ENCODE measurements at regions of chr19 and their contacts with region 1.

Region 1: GRCh38 chr19:46728693-46729676 is 12.1 kb upstream of the PRKD2 start:
- DNase-seq: peak; percentile 82
- H3K4me3 Mint-ChIP-seq: no peak overlapping the region
- H3K27ac Mint-ChIP-seq: no peak overlapping the region
- H3K4me1 Mint-ChIP-seq: peaks cover 14% of the 10 kb centered on the region
- H3K27me3 Mint-ChIP-seq: no peaks in the 10 kb centered on the region

Region 2: GRCh38 chr19:46717034-46717723 is 11.8 kb before region 1 on chr19 and contains the start of gene PRKD2:
- CTCF ChIA-PET with region 1: interaction called, 30 read pairs
- intact Hi-C with region 1: no loop called
- DNase-seq: peak; percentile 93
- H3K4me3 Mint-ChIP-seq: peak within 1 kb of the TSS; percentile 96
- H3K27ac Mint-ChIP-seq: peak within 1 kb of the TSS; percentile 94
- H3K4me1 Mint-ChIP-seq: peaks cover 46% of the 10 kb centered on the region
- H3K27me3 Mint-ChIP-seq: no peaks in the 10 kb centered on the region
- total RNA-seq, gene PRKD2: 62.2 to 62.3 TPM

Region 3: GRCh38 chr19:46741447-46741846 is 12.5 kb after region 1 on chr19:
- CTCF ChIA-PET with region 1: interaction called, 21 read pairs
- intact Hi-C with region 1: no loop called
- DNase-seq: no peak
- H3K4me3 Mint-ChIP-seq: no peak overlapping the region
- H3K27ac Mint-ChIP-seq: no peak overlapping the region
- H3K4me1 Mint-ChIP-seq: peaks cover 45% of the 10 kb centered on the region
- H3K27me3 Mint-ChIP-seq: no peaks in the 10 kb centered on the region

Region 4: GRCh38 chr19:46813839-46814363 is 84.9 kb after region 1 on chr19:
- CTCF ChIA-PET with region 1: no interaction called
- intact Hi-C with region 1: no loop called
- DNase-seq: no peak
- H3K4me3 Mint-ChIP-seq: no peak overlapping the region
- H3K27ac Mint-ChIP-seq: no peak overlapping the region
- H3K4me1 Mint-ChIP-seq: no peaks in the 10 kb centered on the region
- H3K27me3 Mint-ChIP-seq: no peaks in the 10 kb centered on the region